CD8-positive, alpha-beta memory T cell (primary cell): ENCODE measurements at regions of chr20 and their contacts with region 1.

Region 1: DNA sequence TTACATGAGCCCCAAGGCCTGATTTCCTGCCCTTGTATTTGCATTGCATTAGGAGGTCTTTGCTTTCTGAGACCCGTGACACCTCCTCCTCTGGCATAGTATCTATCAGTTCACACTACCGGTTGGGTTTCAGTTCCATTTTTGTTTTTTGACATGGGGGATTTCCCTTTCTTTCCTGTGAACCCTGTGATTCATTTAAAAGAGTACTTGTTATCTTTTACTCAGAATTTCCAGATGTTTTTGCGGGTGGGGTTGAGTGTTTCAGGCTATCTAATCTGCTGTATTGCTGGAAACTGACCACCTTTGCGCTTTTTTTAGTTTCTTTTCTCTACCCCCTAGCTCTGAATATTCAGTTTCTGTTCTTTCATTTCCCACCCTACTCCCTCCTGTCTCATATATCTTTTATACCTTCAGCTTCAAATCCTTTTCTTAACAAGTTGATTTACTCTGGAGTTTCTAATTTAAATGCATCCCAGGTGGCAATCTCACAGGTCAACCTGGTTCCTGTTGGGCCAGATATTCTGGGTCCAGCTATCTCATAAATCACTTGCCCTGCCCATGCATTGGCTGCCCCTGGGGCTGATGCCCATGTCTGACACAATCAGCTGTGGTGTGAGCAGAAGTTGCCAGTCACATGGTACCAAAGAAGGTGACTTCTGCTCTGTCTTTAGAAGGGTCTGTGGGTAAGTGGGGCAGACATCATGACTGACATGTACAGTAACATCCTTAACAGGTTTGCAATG is 14.3 kb upstream of the NCOA3 start:
- DNase-seq: peak; percentile 37 to 76 (median 70)
- H3K4me3 ChIP-seq: no peak overlapping the region
- H3K4me3 Mint-ChIP-seq: peak overlapping the region; percentile 2 to 81 (median 67)
- H3K27ac ChIP-seq: peak overlapping the region; percentile 63
- H3K27ac Mint-ChIP-seq: peak overlapping the region; percentile 80 to 95 (median 89)
- H3K4me1 ChIP-seq: peaks cover 23% of the 10 kb centered on the region
- H3K4me1 Mint-ChIP-seq: peaks cover 22 to 41% (median 39%) of the 10 kb centered on the region in 3 donors
- H3K27me3 ChIP-seq: no peaks in the 10 kb centered on the region
- H3K27me3 Mint-ChIP-seq: no peaks in the 10 kb centered on the region

Region 2: GRCh38 chr20:47501483-47502270 is 14.3 kb after region 1 on chr20 and contains the start of gene NCOA3:
- CTCF ChIA-PET with region 1: interaction called, 12 read pairs
- POLR2A ChIA-PET with region 1: interaction called, 37 read pairs
- DNase-seq: peak; percentile 79 to 90 (median 87)
- H3K4me3 ChIP-seq: peak within 1 kb of the TSS; percentile 91
- H3K4me3 Mint-ChIP-seq: peak within 1 kb of the TSS; percentile 88 to 99 (median 98)
- H3K27ac ChIP-seq: peak within 1 kb of the TSS; percentile 80
- H3K27ac Mint-ChIP-seq: peak within 1 kb of the TSS; percentile 84 to 99 (median 94)
- H3K4me1 ChIP-seq: peaks cover 38% of the 10 kb centered on the region
- H3K4me1 Mint-ChIP-seq: peaks cover 37 to 57% (median 54%) of the 10 kb centered on the region in 3 donors
- H3K27me3 ChIP-seq: no peaks in the 10 kb centered on the region
- H3K27me3 Mint-ChIP-seq: no peaks in the 10 kb centered on the region
- total RNA-seq, gene NCOA3: 92.4 to 93.8 TPM